SK-N-SH (cell line): ENCODE measurements at regions of chr1 and their contacts with region 1.

Region 1: DNA sequence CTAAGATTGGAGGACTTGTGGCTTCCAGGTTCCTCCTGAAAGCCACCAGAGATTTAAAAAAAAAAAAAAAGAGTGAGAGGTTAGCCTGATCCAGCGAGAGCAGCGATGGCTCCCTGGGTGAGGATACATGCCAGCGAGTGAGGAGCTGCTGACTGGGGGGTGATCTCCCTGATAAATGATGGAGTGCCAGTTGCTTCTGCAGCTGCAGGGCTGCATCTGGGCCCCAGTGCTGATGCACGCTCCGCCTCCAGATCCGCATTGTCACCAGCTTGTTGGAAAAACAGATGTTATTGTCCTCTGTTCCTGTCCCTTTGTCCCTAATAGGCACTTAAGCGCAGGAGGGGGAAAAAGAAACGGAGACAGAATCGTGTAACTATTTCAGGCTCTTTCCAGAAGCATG is 28.6 kb downstream of the UBIAD1 start:
- DNase-seq: peak; percentile 91
- H3K4me3 ChIP-seq: no peak overlapping the region
- H3K27ac ChIP-seq: peak overlapping the region in 1 of 2 experiments; percentile 90; a peak in 2 of 4 replicates
- H3K4me1 ChIP-seq: peaks cover 0 to 20% of the 10 kb centered on the region in 2 experiments; a peak in 2 of 4 replicates
- H3K27me3 ChIP-seq: no peaks in the 10 kb centered on the region
- CTCF ChIP-seq: no peak
- EP300 ChIP-seq: peak in 1 of 2 experiments; percentile 82; a peak in 2 of 4 replicates
- RAD21 ChIP-seq: peak; percentile 22

Region 2: DNA sequence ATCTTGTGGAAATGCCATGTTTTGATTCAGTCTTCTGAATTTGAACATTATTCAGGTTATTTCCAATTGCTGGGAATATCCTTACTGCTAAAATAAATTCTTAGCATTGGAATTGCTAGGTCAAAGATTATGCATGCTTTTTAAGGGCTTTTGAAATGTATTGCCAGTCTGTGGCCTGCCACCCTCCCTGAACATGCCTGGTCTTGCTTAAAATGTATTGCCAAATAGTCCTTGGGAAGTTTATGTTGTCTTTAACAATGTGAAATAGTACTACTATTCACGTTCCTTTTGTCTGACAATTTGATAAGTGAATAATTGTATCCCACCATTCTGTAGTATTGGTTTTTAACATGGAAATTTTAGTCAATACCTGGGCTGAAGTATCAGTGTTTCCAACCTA is 275.5 kb before region 1 on chr1:
- CTCF ChIA-PET with region 1: no interaction called
- POLR2A ChIA-PET with region 1: no interaction called
- DNase-seq: no peak
- H3K4me3 ChIP-seq: no peak overlapping the region
- H3K27ac ChIP-seq: no peak overlapping the region; a peak in 2 of 4 replicates
- H3K4me1 ChIP-seq: no peaks in the 10 kb centered on the region
- H3K27me3 ChIP-seq: no peaks in the 10 kb centered on the region
- CTCF ChIP-seq: no peak
- EP300 ChIP-seq: no peak
- RAD21 ChIP-seq: no peak

Region 3: GRCh38 chr1:11124965-11125364 is 176.6 kb before region 1 on chr1:
- CTCF ChIA-PET with region 1: no interaction called
- POLR2A ChIA-PET with region 1: no interaction called
- DNase-seq: no peak
- H3K4me3 ChIP-seq: no peak overlapping the region
- H3K27ac ChIP-seq: no peak overlapping the region
- H3K4me1 ChIP-seq: no peaks in the 10 kb centered on the region
- H3K27me3 ChIP-seq: no peaks in the 10 kb centered on the region
- CTCF ChIP-seq: no peak
- EP300 ChIP-seq: no peak
- RAD21 ChIP-seq: no peak

Region 4: GRCh38 chr1:11237356-11237755 is 64.2 kb before region 1 on chr1:
- CTCF ChIA-PET with region 1: no interaction called
- POLR2A ChIA-PET with region 1: no interaction called
- DNase-seq: no peak
- H3K4me3 ChIP-seq: no peak overlapping the region
- H3K27ac ChIP-seq: no peak overlapping the region
- H3K4me1 ChIP-seq: no peaks in the 10 kb centered on the region
- H3K27me3 ChIP-seq: no peaks in the 10 kb centered on the region
- CTCF ChIP-seq: no peak
- EP300 ChIP-seq: no peak
- RAD21 ChIP-seq: no peak

Region 5: GRCh38 chr1:11285883-11286734 is 15.5 kb before region 1 on chr1:
- CTCF ChIA-PET with region 1: interaction called, 11 read pairs
- POLR2A ChIA-PET with region 1: no interaction called
- DNase-seq: peak; percentile 49
- H3K4me3 ChIP-seq: no peak overlapping the region
- H3K27ac ChIP-seq: no peak overlapping the region
- H3K4me1 ChIP-seq: peaks cover 0 to 10% of the 10 kb centered on the region in 2 experiments; a peak in 2 of 4 replicates
- H3K27me3 ChIP-seq: no peaks in the 10 kb centered on the region
- CTCF ChIP-seq: peak; percentile 55
- EP300 ChIP-seq: no peak
- RAD21 ChIP-seq: peak; percentile 81